Activated naive CD4-positive, alpha-beta T cell treated with anti-CD3 and anti-CD28 coated beads for 36 hours (primary cell): ENCODE measurements at regions of chr10 and their contacts with region 1.

Region 1: DNA sequence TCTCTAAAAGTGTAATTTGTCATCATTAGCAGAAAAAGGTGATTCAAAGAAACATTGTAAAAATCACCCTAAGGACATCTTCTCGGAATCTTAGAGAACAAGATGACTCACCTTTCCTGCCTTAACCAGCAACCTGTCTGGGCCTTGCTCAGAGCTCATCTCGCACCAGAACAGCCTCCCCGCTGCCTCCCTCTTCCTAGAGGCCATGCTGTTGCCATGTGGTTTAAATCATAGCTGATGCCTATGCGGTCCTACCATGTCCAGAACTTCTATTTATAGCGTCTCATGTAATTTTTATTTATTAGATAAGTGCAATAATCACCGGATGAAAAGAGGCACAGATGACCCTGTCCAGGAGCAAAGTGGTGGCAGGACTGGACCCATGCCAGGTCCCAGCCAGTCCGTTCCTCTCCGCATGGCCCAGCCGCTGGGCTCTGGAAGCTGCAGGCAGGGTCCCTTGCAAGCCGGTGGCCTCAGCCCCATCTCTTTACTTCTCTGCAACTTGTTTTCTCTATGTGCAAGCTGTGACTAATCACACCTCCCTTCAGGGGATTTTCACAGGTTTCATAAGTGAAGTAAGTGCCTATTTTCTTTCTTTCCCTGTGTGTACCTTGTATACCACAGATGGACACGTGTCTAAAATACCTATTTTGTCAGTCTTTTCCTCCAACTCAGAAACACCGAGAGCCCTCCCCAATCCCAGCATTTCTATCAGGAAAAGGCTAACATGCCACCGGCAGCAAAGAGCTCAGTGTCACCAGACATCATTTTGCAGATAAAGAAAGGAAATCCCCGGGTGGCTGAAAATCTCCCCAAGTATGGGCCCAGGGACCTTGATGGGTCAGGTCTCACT is 27.1 kb downstream of the KLF6 start:
- DNase-seq: peak; percentile 84
- H3K4me3 Mint-ChIP-seq: peak overlapping the region; percentile 62
- H3K27ac Mint-ChIP-seq: peak overlapping the region; percentile 99
- H3K4me1 Mint-ChIP-seq: peaks cover 77% of the 10 kb centered on the region
- H3K27me3 Mint-ChIP-seq: no peaks in the 10 kb centered on the region

Region 2: GRCh38 chr10:3095373-3096139 is 662.3 kb before region 1 on chr10:
- CTCF ChIA-PET with region 1: no interaction called
- intact Hi-C with region 1: loop called (anchors 5 kb)
- DNase-seq: peak; percentile 79
- H3K4me3 Mint-ChIP-seq: peak overlapping the region; percentile 27
- H3K27ac Mint-ChIP-seq: peak overlapping the region; percentile 81
- H3K4me1 Mint-ChIP-seq: peaks cover 56% of the 10 kb centered on the region
- H3K27me3 Mint-ChIP-seq: no peaks in the 10 kb centered on the region

Region 3: GRCh38 chr10:3668276-3668965 is 89.4 kb before region 1 on chr10:
- CTCF ChIA-PET with region 1: no interaction called
- intact Hi-C with region 1: loop called (anchors 2 kb)
- DNase-seq: peak; percentile 75
- H3K4me3 Mint-ChIP-seq: peak overlapping the region; percentile 74
- H3K27ac Mint-ChIP-seq: peak overlapping the region; percentile 84
- H3K4me1 Mint-ChIP-seq: peaks cover 37% of the 10 kb centered on the region
- H3K27me3 Mint-ChIP-seq: no peaks in the 10 kb centered on the region

Region 4: DNA sequence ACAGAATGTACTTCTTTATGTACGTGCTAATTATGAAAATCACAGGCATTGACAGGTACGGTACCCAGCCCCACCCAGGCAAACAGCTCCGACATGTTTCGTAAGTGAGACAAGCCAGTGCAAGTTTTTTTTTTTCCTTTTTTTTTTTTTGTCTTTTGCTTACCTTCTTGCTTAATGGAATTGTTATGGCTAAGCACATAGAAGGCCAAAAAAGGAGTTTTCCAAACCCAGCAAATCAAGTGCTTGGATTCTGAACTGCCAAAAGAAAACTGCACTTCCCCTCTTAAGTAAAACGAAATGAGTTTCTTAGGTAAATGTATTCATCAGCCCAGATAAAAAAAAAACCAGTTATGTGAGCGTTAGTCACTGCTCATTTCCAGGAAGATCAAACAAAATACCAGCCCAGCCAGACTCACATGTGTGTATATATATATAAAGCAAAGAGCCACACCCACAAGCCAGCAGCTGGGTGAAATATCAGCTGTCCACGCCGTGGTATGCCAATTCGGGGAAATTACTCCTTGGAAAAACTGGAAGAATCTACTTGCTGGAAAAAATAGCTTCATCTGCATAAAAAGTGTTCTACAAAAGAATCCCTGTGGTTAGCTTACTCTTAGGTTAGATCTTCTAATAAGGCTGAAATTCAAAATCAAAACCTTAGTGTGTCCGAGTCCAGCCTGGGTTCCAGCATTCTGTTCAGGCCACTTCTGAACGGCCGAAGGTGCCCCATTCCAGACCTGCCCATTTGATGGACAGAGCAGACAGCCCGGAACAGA is 19.1 kb after region 1 on chr10:
- CTCF ChIA-PET with region 1: interaction called, 6 read pairs
- intact Hi-C with region 1: loop called (anchors 1 kb)
- DNase-seq: peak; percentile 70
- H3K4me3 Mint-ChIP-seq: peak overlapping the region; percentile 53
- H3K27ac Mint-ChIP-seq: peak overlapping the region; percentile 90
- H3K4me1 Mint-ChIP-seq: peaks cover 65% of the 10 kb centered on the region
- H3K27me3 Mint-ChIP-seq: no peaks in the 10 kb centered on the region

Region 5: GRCh38 chr10:3811291-3811870 is 53.5 kb after region 1 on chr10:
- CTCF ChIA-PET with region 1: no interaction called
- intact Hi-C with region 1: loop called (anchors 1 kb)
- DNase-seq: peak; percentile 82
- H3K4me3 Mint-ChIP-seq: peak overlapping the region; percentile 52
- H3K27ac Mint-ChIP-seq: peak overlapping the region; percentile 96
- H3K4me1 Mint-ChIP-seq: peaks cover 76% of the 10 kb centered on the region
- H3K27me3 Mint-ChIP-seq: no peaks in the 10 kb centered on the region

Region 6: GRCh38 chr10:3873728-3874461 is 116.0 kb after region 1 on chr10:
- CTCF ChIA-PET with region 1: interaction called, 3 read pairs
- intact Hi-C with region 1: loop called (anchors 1 kb)
- DNase-seq: no peak
- H3K4me3 Mint-ChIP-seq: no peak overlapping the region
- H3K27ac Mint-ChIP-seq: peak overlapping the region; percentile 36
- H3K4me1 Mint-ChIP-seq: peaks cover 52% of the 10 kb centered on the region
- H3K27me3 Mint-ChIP-seq: no peaks in the 10 kb centered on the region

Region 7: GRCh38 chr10:4656576-4657182 is 898.8 kb after region 1 on chr10:
- CTCF ChIA-PET with region 1: no interaction called
- intact Hi-C with region 1: loop called (anchors 5 kb)
- DNase-seq: peak; percentile 58
- H3K4me3 Mint-ChIP-seq: no peak overlapping the region
- H3K27ac Mint-ChIP-seq: no peak overlapping the region
- H3K4me1 Mint-ChIP-seq: peaks cover 18% of the 10 kb centered on the region
- H3K27me3 Mint-ChIP-seq: peaks cover 9% of the 10 kb centered on the region